OCI-LY7 (cell line): ENCODE measurements at regions of chr2 and their contacts with region 1.

Region 1: DNA sequence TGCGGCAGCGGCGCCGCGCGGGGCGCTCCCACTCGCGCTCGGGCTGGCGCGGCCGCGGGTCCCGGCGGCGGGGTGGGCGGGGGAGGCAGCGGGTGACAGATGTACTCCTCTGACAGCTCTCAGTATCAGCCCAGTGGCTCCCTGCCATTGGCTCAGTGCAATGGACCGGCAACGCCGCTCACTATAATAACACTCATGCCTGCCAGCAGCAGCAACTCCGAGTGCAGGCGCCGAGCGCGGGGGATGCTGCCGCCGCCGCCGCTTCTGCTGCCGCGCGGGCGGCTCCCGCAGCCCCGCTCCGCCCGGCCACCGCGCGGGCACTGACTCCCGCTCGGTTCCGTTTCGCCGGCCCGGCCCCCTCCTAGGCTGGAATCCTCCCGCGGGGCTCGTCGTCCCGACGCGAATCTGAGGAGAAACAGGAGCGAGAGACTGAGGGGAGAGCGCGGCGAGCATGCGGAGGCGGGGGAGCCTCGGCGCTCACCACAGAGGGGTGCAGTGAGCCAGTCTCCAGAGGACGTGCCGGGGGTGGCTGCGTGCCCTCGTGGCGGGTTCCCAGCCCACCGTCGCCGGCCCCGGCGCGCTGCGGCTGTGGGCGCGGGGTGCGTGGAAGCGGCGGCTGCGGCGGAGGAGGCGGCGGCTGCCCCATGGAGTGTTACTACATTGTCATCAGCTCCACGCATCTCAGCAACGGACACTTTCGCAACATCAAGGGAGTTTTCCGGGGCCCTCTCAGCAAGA is at the start of gene ZNF804A:
- DNase-seq: peak; percentile 96
- H3K4me3 ChIP-seq: peak within 1 kb of the TSS; percentile 93
- H3K27ac ChIP-seq: peak within 1 kb of the TSS; percentile 86
- H3K4me1 ChIP-seq: peaks cover 16% of the 10 kb centered on the region
- CTCF ChIP-seq: 0 out of 2 replicates have a peak, but pooled peaks have one; percentile 13
- total RNA-seq, gene ZNF804A: 19.9 and 24.1 TPM in 2 replicates

Region 2: DNA sequence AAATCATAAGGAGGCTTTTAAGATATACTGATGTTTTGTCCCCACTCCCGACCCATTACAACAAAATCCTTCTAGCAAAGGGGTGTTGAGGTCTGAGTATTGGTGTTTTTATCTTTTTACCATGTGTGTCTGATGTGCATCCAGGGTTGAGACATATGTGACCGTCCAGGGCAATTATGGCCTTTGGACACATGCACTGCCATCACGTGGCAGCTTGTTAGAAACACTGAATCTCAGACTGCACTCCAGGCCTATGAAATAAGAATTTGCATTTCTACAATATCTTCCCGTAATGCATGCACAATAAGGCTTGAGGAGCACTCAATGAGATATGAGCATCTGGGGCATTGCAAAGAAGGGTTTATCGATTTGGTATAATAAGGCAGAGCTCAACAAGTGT is 235.3 kb before region 1 on chr2:
- CTCF ChIA-PET with region 1: no interaction called
- POLR2A ChIA-PET with region 1: no interaction called
- intact Hi-C with region 1: loop called (anchors 5 kb)
- DNase-seq: peak; percentile 68
- H3K4me3 ChIP-seq: peak overlapping the region; percentile 18
- H3K27ac ChIP-seq: no peak overlapping the region
- H3K4me1 ChIP-seq: peaks cover 26% of the 10 kb centered on the region
- CTCF ChIP-seq: peak; percentile 72

Region 3: GRCh38 chr2:184444217-184444616 is 154.3 kb before region 1 on chr2:
- CTCF ChIA-PET with region 1: no interaction called
- POLR2A ChIA-PET with region 1: interaction called, 23 read pairs
- intact Hi-C with region 1: loop called (anchors 1 kb)
- DNase-seq: peak; percentile 94
- H3K4me3 ChIP-seq: peak overlapping the region; percentile 31
- H3K27ac ChIP-seq: peak overlapping the region; percentile 97
- H3K4me1 ChIP-seq: peaks cover 43% of the 10 kb centered on the region
- CTCF ChIP-seq: no peak

Region 4: DNA sequence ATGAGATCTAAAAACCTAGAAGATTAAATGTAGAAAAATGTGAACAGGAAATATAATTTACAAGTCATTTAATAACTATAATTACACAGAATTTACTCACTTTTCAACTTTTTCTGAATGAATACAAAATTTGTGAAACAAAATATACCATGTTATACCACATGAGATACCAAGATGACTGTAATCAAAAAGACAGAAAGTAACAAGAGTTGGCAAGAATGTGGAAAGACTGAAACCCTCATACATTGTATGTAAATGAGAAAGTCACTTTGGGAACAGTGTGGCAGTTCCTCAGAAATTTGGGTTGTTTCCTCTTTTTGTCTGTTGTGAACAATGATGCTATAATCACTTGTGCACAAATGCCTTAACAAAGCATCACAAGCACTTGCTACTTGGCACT is 145.6 kb before region 1 on chr2:
- CTCF ChIA-PET with region 1: interaction called, 3 read pairs
- POLR2A ChIA-PET with region 1: interaction called, 10 read pairs
- intact Hi-C with region 1: no loop called
- DNase-seq: peak; percentile 48
- H3K4me3 ChIP-seq: peak overlapping the region; percentile 18
- H3K27ac ChIP-seq: peak overlapping the region; percentile 73
- H3K4me1 ChIP-seq: peaks cover 49% of the 10 kb centered on the region
- CTCF ChIP-seq: no peak

Region 5: GRCh38 chr2:184463102-184463865 is 135.2 kb before region 1 on chr2:
- CTCF ChIA-PET with region 1: no interaction called
- POLR2A ChIA-PET with region 1: interaction called, 12 read pairs
- intact Hi-C with region 1: no loop called
- DNase-seq: peak; percentile 59
- H3K4me3 ChIP-seq: no peak overlapping the region
- H3K27ac ChIP-seq: peak overlapping the region; percentile 5
- H3K4me1 ChIP-seq: peaks cover 22% of the 10 kb centered on the region
- CTCF ChIP-seq: no peak

Region 6: GRCh38 chr2:184611361-184612085 is 13.0 kb after region 1 on chr2:
- CTCF ChIA-PET with region 1: no interaction called
- POLR2A ChIA-PET with region 1: interaction called, 16 read pairs
- intact Hi-C with region 1: no loop called
- DNase-seq: peak; percentile 42
- H3K4me3 ChIP-seq: no peak overlapping the region
- H3K27ac ChIP-seq: no peak overlapping the region
- H3K4me1 ChIP-seq: no peaks in the 10 kb centered on the region
- CTCF ChIP-seq: peak; percentile 87

Region 7: GRCh38 chr2:184730288-184730687 is 131.8 kb after region 1 on chr2:
- CTCF ChIA-PET with region 1: no interaction called
- POLR2A ChIA-PET with region 1: interaction called, 30 read pairs
- intact Hi-C with region 1: loop called (anchors 2 kb)
- DNase-seq: peak; percentile 78
- H3K4me3 ChIP-seq: peak overlapping the region; percentile 26
- H3K27ac ChIP-seq: peak overlapping the region; percentile 79
- H3K4me1 ChIP-seq: peaks cover 82% of the 10 kb centered on the region
- CTCF ChIP-seq: no peak